Adrenal gland (tissue), 19 donors: ENCODE measurements at regions of chr9 and their contacts with region 1.

Region 1: DNA sequence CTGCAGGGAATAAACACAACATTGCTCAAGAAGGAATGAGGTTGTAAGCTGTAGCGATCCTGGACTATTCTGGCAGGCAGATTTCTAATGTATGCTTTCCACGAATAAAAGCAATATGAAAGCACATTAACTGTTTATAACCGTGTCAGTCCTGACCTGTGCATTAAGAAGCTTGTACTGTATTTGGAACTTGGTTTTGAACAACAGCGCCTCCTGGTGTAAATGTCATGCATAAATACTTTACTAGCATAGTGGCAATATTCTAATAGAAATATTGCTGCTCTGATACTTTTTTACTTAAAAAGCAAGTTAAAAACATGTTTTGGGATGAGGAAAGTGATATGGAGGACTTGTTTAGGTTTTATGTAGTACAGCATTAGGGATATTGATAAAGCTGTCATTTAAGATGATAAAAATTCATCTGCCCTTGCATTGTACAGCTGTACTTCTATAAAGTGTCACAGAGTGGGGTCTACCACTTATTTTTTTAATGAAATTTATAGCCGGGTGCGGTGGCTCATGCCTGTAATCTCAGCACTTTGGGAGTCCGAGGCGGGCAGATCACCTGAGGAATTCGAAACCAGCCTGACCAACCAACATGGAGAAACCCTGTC is 70.7 kb upstream of the GNE start:
- DNase-seq: peak in 4 of 7 donors; percentile 47 to 57 (median 56)
- H3K4me3 ChIP-seq: no peak overlapping the region
- H3K27ac ChIP-seq: no peak overlapping the region
- H3K4me1 ChIP-seq: peaks cover 0 to 9% of the 10 kb centered on the region in 2 donors
- H3K27me3 ChIP-seq: no peaks in the 10 kb centered on the region
- CTCF ChIP-seq: peak; percentile 74 to 90 (median 84)
- POLR2A ChIP-seq: no peak

Region 2: DNA sequence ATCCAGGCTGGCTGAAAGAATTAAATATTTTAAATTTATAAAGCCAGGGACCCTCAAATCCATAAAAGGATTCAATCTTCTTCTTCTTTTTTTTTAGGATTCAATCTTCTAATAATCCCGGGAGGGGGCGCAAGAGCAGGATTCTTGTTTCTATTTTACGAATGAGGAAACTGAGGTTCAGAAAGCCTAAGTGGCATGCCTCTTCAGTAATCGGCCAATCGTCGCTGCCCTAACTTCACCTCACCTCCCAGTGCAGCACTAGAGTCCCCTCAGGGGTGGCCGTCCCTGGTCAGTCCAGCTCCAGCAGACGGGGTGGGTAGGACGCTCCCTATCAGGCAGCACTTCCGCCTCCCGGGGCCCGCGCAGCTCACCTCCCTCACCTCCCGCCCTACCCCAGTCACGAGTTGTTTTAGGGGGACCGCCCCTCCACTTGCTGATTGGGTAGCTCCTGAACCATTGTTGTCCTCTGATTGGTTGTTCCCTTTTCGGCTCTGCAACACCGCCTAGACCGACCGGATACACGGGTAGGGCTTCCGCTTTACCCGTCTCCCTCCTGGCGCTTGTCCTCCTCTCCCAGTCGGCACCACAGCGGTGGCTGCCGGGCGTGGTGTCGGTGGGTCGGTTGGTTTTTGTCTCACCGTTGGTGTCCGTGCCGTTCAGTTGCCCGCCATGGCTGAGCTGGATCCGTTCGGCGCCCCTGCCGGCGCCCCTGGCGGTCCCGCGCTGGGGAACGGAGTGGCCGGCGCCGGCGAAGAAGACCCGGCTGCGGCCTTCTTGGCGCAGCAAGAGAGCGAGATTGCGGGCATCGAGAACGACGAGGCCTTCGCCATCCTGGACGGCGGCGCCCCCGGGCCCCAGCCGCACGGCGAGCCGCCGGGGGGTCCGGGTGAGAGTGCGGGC is 138.3 kb before region 1 on chr9 and contains the start of gene CLTA:
- intact Hi-C with region 1: loop called in 1 of 2 experiments (anchors 5 kb)
- DNase-seq: peak; percentile 95 to 99 (median 98)
- H3K4me3 ChIP-seq: peak within 1 kb of the TSS; percentile 76 to 91 (median 79)
- H3K27ac ChIP-seq: peak within 1 kb of the TSS; percentile 22 to 92 (median 87)
- H3K4me1 ChIP-seq: peaks cover 37 to 45% of the 10 kb centered on the region in 2 donors
- H3K27me3 ChIP-seq: no peaks in the 10 kb centered on the region
- CTCF ChIP-seq: peak; percentile 38 to 70 (median 58)
- POLR2A ChIP-seq: peak; percentile 85 to 90
- total RNA-seq, gene CLTA: 167 to 301 (median 226) TPM

Region 3: DNA sequence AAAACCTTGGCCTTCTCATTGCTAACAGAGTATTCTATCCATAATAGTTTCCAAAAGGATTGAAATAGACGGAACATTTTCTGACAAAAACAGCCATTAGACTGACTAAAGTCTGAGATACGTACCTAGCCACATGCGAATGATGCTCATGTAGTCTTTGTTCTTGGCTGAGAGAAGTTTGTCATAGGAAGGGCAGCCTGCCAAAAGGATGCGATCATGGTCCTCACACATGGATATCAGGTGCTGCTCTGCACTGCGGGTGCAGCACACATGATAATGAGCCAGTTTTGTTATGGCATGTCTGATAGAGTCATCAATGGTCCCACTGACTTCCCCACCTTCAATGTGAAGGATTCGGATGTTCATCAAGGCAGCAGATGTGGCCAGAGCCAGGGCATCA is 83.0 kb before region 1 on chr9:
- intact Hi-C with region 1: loop called in 1 of 2 experiments (anchors 5 kb)
- DNase-seq: no peak
- H3K4me3 ChIP-seq: no peak overlapping the region
- H3K27ac ChIP-seq: no peak overlapping the region
- H3K4me1 ChIP-seq: peaks cover 3 to 7% of the 10 kb centered on the region in 2 donors
- H3K27me3 ChIP-seq: no peaks in the 10 kb centered on the region
- CTCF ChIP-seq: no peak
- POLR2A ChIP-seq: no peak